ENCODE measurements at regions of chr19 and their contacts with region 1.

Region 1: GRCh38 chr19:51660975-51661600 is 14.5 kb upstream of the SIGLEC14 start:
- DNase-seq: no peak
- H3K4me3 Mint-ChIP-seq: no peak overlapping the region
- H3K27ac Mint-ChIP-seq: no peak overlapping the region
- H3K4me1 Mint-ChIP-seq: peaks cover 6% of the 10 kb centered on the region
- H3K27me3 Mint-ChIP-seq: peaks cover 14% of the 10 kb centered on the region

Region 2: GRCh38 chr19:51158474-51159129 is 502.5 kb before region 1 on chr19:
- intact Hi-C with region 1: loop called (anchors 1 kb)
- DNase-seq: peak; percentile 60
- H3K4me3 Mint-ChIP-seq: no peak overlapping the region
- H3K27ac Mint-ChIP-seq: peak overlapping the region; percentile 41
- H3K4me1 Mint-ChIP-seq: peaks cover 9% of the 10 kb centered on the region
- H3K27me3 Mint-ChIP-seq: peaks cover 5% of the 10 kb centered on the region

Region 3: GRCh38 chr19:51422053-51422448 is 239.0 kb before region 1 on chr19:
- intact Hi-C with region 1: loop called (anchors 1 kb)
- DNase-seq: peak; percentile 78
- H3K4me3 Mint-ChIP-seq: no peak overlapping the region
- H3K27ac Mint-ChIP-seq: no peak overlapping the region
- H3K4me1 Mint-ChIP-seq: peaks cover 10% of the 10 kb centered on the region
- H3K27me3 Mint-ChIP-seq: peaks cover 26% of the 10 kb centered on the region

Region 4: DNA sequence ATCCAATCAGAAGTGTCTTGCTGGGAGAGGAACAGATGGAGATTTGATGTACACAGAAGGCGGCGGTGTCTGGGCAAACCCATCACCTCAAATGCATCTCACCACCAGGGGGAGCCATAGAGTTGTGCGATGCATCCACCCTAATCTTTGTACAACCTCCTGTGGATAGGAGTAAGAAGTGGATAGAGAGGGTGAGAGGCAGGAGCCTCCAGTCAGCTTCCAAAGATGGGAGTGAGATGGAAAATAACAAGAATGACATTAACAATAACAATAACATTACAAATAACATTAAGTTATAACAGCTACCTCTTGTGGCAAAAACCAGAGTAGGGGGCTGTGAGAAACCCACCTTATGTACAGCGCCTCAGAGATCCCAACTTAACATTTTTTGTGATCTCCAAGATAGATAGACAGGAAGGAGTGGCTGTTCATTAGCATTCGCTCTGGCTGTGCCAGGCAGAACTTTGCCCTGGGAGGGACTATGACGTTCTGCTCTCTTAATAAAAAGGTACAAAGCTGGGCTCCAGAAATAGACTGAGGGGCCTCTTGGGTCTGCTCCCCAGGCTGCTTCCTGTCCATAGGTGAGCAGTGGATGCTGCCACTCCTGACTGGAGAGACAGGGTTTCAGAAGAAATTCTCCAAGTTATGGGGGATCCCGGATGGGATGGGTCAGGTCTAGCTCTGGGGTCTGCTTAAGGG is 187.9 kb before region 1 on chr19:
- intact Hi-C with region 1: loop called (anchors 1 kb)
- DNase-seq: peak; percentile 63
- H3K4me3 Mint-ChIP-seq: no peak overlapping the region
- H3K27ac Mint-ChIP-seq: peak overlapping the region; percentile 55
- H3K4me1 Mint-ChIP-seq: peaks cover 31% of the 10 kb centered on the region
- H3K27me3 Mint-ChIP-seq: peaks cover 9% of the 10 kb centered on the region

Region 5: DNA sequence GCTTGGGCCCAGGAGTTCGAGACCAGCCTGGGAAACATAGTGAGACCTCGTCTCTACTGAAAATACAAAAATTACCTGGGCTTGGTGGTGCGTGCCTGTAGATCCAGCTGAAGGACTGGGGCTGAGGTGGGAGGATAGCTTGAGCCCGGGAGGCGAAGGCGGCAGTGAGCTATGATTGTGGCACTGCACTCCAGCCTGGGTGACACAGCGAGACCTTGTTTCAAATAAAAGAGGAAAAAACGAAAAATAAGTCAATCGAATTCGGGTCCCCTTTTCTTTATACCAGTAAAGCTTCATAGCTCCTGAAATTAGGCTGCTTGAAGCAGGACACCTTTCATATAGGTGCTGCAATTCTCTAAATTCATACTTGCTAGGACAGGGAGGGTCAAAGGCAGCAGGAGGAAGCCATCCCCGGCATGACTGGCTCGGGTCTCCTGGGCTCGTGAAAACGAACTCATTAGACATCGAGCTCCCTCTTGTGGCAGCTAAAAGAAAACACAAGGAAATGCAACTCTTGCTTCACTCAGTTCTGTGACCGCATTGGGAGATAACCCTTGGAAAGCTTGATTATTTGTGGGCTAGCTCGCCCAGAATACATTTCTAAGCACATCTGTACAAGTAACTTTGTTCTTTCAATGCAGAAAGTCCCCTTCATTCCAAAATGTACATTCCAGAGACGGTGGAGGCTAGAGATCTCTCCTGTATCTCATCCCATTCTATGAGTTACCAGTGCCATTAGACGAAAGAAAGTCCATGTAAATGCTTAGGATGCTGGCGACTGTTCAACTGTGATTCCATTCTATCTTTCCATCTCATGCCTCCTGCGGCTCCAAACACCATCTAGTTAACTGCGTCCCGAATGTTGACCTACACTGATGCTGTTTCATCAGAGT is 116.7 kb after region 1 on chr19:
- intact Hi-C with region 1: loop called (anchors 10 kb)
- DNase-seq: peak; percentile 11
- H3K4me3 Mint-ChIP-seq: no peak overlapping the region
- H3K27ac Mint-ChIP-seq: peak overlapping the region; percentile 32
- H3K4me1 Mint-ChIP-seq: peaks cover 8% of the 10 kb centered on the region
- H3K27me3 Mint-ChIP-seq: peaks cover 2% of the 10 kb centered on the region